Right cardiac atrium (tissue), 5 donors: ENCODE measurements at regions of chr15 and their contacts with region 1.

Region 1: DNA sequence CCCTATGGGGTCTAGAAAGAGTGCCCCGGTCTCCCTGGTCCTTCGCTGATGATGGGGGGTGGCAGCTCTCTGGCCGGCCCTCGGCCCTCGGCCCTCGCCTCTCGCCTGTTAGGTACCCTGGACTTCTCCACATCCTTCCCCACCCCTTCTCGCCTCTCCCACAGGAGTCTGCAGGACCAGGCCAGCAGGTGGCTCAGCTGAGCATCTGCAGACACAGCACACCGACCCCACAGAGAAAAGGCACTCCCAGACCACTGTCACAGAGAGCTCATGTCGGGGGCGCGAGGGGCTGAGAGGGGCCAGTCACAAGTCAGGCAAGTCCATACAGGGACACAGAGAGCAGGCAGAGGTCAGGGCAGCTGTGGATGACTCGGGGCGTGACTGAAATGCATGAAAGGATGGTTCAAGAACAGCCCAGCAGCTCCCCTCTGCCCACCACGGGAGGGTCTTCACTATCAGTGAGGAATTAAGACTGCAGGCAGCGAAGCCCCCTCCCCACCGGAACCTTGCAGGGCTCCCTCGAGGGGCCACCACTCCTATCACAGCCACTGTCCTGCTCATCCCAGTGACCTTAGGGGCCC is 181.7 kb upstream of the NSMCE3 start:
- DNase-seq: peak; percentile 19 to 67 (median 62)
- ATAC-seq: peak; percentile 64 to 68
- H3K4me3 ChIP-seq: no peak overlapping the region
- H3K27ac ChIP-seq: no peak overlapping the region
- H3K4me1 ChIP-seq: no peaks in the 10 kb centered on the region
- H3K27me3 ChIP-seq: no peaks in the 10 kb centered on the region

Region 2: GRCh38 chr15:29103824-29104565 is 347.3 kb before region 1 on chr15:
- intact Hi-C with region 1: no loop called
- DNase-seq: peak; percentile 77 to 89 (median 89)
- ATAC-seq: peak; percentile 87 to 93
- H3K4me3 ChIP-seq: peak overlapping the region; percentile 16
- H3K27ac ChIP-seq: no peak overlapping the region
- H3K4me1 ChIP-seq: no peaks in the 10 kb centered on the region
- H3K27me3 ChIP-seq: no peaks in the 10 kb centered on the region

Region 3: GRCh38 chr15:29382862-29383261 is 68.4 kb before region 1 on chr15:
- intact Hi-C with region 1: loop called in 1 of 4 experiments (anchors 10 kb)
- DNase-seq: no peak
- ATAC-seq: peak in 1 of 2 donors; percentile 27
- H3K4me3 ChIP-seq: no peak overlapping the region
- H3K27ac ChIP-seq: no peak overlapping the region
- H3K4me1 ChIP-seq: peaks cover 4% of the 10 kb centered on the region
- H3K27me3 ChIP-seq: no peaks in the 10 kb centered on the region

Region 4: GRCh38 chr15:29570931-29571791 is 119.9 kb after region 1 on chr15:
- intact Hi-C with region 1: loop called in 1 of 4 experiments (anchors 5 kb)
- DNase-seq: peak; percentile 17 to 65 (median 59)
- ATAC-seq: peak; percentile 57 to 66
- H3K4me3 ChIP-seq: peak overlapping the region; percentile 64
- H3K27ac ChIP-seq: no peak overlapping the region
- H3K4me1 ChIP-seq: peaks cover 2% of the 10 kb centered on the region
- H3K27me3 ChIP-seq: no peaks in the 10 kb centered on the region